ENCODE measurements at regions of chr5 and their contacts with region 1.

Region 1: DNA sequence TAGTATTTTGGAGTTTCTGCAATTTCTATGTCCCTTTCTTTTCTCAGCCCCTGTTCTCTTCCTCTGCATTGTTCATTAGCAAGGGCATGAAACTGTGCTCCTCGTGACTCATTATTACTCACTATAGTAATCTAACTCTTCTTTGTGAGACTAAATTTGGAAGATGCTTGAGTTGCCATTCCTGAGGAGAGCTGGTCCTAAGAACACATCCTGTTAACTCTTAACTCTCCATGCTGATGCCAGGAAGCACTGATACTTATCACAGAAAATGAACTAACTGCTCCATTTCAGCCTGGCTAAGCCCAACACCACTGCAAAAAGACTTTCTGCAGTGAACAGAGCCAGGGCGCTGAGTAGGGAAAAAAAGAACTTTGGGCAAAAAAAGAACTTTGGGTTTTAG is 10.6 kb upstream of the CSNK1A1 start:
- DNase-seq: no peak
- ATAC-seq: peak in 3 of 4 experiments; percentile 50 to 90 (median 87)
- H3K4me3 ChIP-seq: no peak overlapping the region
- H3K4me3 Mint-ChIP-seq: no peak overlapping the region
- H3K27ac ChIP-seq: peak overlapping the region; percentile 3
- H3K27ac Mint-ChIP-seq: peak overlapping the region; percentile 13 to 20
- H3K4me1 ChIP-seq: peaks cover 6 to 12% of the 10 kb centered on the region in 2 experiments
- H3K4me1 Mint-ChIP-seq: peaks cover 20 to 25% (median 22%) of the 10 kb centered on the region in 3 donors
- H3K27me3 ChIP-seq: no peaks in the 10 kb centered on the region
- H3K27me3 Mint-ChIP-seq: no peaks in the 10 kb centered on the region

Region 2: GRCh38 chr5:149381987-149382340 is 179.9 kb before region 1 on chr5:
- CTCF ChIA-PET with region 1: interaction called, 4 to 18 read pairs
- POLR2A ChIA-PET with region 1: no interaction called
- DNase-seq: peak; percentile 10 to 79 (median 60)
- ATAC-seq: peak; percentile 64 to 85 (median 72)
- H3K4me3 ChIP-seq: no peak overlapping the region
- H3K4me3 Mint-ChIP-seq: no peak overlapping the region
- H3K27ac ChIP-seq: no peak overlapping the region
- H3K27ac Mint-ChIP-seq: no peak overlapping the region
- H3K4me1 ChIP-seq: peaks cover 0 to 7% of the 10 kb centered on the region in 2 experiments
- H3K4me1 Mint-ChIP-seq: peaks cover 0 to 9% (median 2%) of the 10 kb centered on the region in 3 donors
- H3K27me3 ChIP-seq: peaks cover 0 to 23% of the 10 kb centered on the region in 2 experiments
- H3K27me3 Mint-ChIP-seq: peaks cover 0 to 2% of the 10 kb centered on the region in 2 donors

Region 3: DNA sequence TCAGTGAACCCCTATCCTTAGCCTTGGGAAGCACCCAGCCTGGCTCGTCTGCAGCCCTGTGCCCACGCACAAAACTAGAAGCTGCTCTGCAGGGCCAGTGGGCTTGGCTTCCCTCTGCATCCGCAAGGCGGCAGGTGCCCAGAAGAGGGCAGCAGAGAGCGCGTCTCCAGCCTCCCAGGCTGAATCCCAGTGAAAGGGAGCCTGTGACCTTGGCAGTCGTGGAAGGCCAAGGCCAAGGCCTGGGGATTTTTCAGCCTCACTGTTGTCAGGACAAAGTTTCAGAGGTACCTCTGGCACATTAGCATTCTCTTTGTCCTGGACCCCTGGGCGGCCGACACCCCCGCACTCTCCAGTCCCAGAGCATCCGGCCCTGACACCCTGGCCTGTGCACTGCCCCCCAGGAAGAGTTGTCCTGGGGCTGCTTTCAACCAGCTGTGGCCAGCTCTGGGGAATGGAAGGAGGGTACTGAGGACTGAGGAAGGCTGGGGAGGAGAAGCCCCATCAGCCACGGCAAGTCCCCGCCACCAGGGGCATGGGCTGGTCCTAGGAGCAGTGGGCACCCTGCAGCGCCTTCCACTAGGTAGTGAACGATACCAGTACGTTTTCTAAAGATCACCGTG is 119.2 kb before region 1 on chr5:
- CTCF ChIA-PET with region 1: interaction called, 9 to 16 read pairs
- POLR2A ChIA-PET with region 1: no interaction called
- DNase-seq: peak in 34 of 35 experiments; percentile 18 to 76 (median 56)
- ATAC-seq: peak; percentile 71 to 77 (median 74)
- H3K4me3 ChIP-seq: no peak overlapping the region
- H3K4me3 Mint-ChIP-seq: no peak overlapping the region
- H3K27ac ChIP-seq: no peak overlapping the region
- H3K27ac Mint-ChIP-seq: no peak overlapping the region
- H3K4me1 ChIP-seq: peaks cover 0 to 12% of the 10 kb centered on the region in 2 experiments
- H3K4me1 Mint-ChIP-seq: peaks cover 10 to 13% (median 11%) of the 10 kb centered on the region in 3 donors
- H3K27me3 ChIP-seq: peaks cover 0 to 7% of the 10 kb centered on the region in 2 experiments
- H3K27me3 Mint-ChIP-seq: peaks cover 0 to 2% of the 10 kb centered on the region in 2 donors

Region 4: GRCh38 chr5:149551200-149552037 is 10.4 kb before region 1 on chr5 and contains the start of gene CSNK1A1:
- CTCF ChIA-PET with region 1: interaction called, 3 to 11 read pairs
- POLR2A ChIA-PET with region 1: interaction called, 5 read pairs
- DNase-seq: peak; percentile 93 to 100 (median 97)
- ATAC-seq: peak; percentile 88 to 92 (median 90)
- H3K4me3 ChIP-seq: peak within 1 kb of the TSS; percentile 98 to 100
- H3K4me3 Mint-ChIP-seq: peak within 1 kb of the TSS; percentile 95 to 97 (median 95)
- H3K27ac ChIP-seq: peak within 1 kb of the TSS; percentile 98
- H3K27ac Mint-ChIP-seq: peak within 1 kb of the TSS; percentile 97 to 98
- H3K4me1 ChIP-seq: peaks cover 16 to 17% of the 10 kb centered on the region in 2 experiments
- H3K4me1 Mint-ChIP-seq: peaks cover 34 to 37% (median 35%) of the 10 kb centered on the region in 3 donors
- H3K27me3 ChIP-seq: no peaks in the 10 kb centered on the region
- H3K27me3 Mint-ChIP-seq: no peaks in the 10 kb centered on the region
- total RNA-seq, gene CSNK1A1: 161 to 193 (median 178) TPM